ENCODE measurements at regions of chr14 and their contacts with region 1.

Region 1: DNA sequence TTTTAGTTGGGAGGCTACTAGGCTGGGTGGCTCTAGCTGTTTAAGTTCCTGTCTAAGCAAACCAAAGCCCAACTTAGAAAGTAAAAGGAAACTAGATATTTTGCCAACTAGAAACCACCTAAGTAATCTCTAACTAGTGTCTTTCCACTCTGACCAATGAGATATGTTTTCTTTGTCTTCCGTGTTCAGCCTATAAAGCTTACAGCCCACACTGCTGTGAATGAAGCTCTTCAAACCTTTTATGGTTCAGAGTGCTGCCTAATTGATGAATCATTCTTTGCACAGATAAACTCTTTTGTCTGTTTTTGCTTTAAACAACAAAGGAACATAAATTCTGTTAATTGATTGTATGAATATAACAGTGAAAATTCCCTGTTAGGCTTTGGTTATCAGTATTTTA is 66.1 kb downstream of the FUT8 start:
- DNase-seq: no peak
- CTCF ChIP-seq: no peak

Region 2: DNA sequence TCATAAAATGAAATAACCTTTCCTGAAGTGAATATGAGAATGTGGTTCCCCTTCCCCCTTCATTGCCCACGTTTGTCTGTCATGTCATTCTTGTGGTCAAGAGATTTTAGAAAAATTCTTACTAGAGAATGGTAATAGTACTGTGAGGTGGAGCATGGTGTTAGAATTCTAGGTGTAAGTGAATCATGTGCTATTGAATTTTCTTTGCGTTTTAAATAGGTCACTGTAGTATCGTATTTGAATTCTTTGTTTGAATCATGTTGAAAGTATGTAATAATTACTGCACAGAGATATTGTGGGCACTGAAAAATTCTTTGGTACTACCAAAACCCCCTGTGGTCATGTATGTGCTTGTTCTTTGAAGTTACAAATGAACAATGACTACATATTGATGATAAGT is 16.2 kb before region 1 on chr14:
- CTCF ChIA-PET with region 1: interaction called, 15 read pairs
- POLR2A ChIA-PET with region 1: interaction called, 3 read pairs
- DNase-seq: peak; percentile 55
- CTCF ChIP-seq: no peak

Measured in GM10248 (cell line).